ENCODE measurements at regions of chr1 and their contacts with region 1.

Region 1: DNA sequence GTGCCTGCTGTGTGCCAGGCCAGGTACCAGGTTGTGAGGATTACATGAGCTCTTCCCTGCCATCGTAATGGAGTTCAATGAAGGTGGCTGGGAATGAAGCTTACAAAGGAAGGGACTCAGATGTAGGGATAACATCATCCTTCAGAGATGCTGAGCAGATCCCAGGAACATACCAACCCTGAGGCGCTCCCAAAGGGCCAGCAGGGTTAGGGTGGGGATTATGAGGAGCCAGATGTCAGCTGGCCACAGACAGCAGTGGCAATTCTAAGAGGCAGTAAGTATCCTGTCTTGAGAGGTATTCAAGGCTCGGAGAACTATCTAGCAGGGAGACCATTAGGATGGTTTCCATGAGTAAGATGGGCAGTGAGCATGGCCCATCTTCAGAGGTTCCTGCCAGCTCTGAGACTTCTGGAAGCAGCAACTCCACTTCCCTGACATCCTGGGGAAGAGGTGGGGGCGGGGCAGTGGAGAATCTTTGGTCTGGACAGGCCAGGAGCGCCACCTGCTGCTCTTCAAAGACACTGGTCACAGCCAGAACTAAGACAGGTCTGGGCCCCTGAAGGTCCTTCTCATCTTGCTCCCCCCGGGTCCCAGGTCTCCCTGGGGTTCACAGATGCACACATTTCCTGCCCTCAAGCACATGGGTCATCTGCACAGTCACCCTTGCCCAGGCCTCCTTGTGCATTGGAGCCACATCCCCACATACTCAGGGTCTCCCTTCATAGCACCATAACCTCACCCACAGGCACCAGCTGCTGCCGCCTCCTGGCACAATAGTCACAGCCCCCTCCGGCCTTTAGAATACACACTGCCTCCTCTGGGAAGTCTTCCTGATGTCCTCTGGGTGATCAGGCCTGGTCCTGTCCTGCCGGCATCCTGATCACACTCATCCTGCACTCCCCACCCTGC is 2.7 kb upstream of the SDC3 start:
- DNase-seq: peak; percentile 95
- ATAC-seq: peak; percentile 84

Region 2: GRCh38 chr1:30779294-30780071 is 131.8 kb before region 1 on chr1:
- intact Hi-C with region 1: loop called (anchors 5 kb)
- DNase-seq: peak; percentile 93
- ATAC-seq: peak; percentile 76

Region 3: GRCh38 chr1:30801771-30802198 is 109.5 kb before region 1 on chr1:
- intact Hi-C with region 1: loop called (anchors 2 kb)
- DNase-seq: peak; percentile 94
- ATAC-seq: peak; percentile 68